CD4-positive, alpha-beta T cell (primary cell): ENCODE measurements at regions of chr12 and their contacts with region 1.

Region 1: GRCh38 chr12:49740930-49741881 is at the start of gene TMBIM6:
- DNase-seq: peak; percentile 96 to 100 (median 98)
- ATAC-seq: peak; percentile 86
- H3K4me3 ChIP-seq: peak within 1 kb of the TSS; percentile 83
- H3K4me3 Mint-ChIP-seq: peak within 1 kb of the TSS; percentile 92
- H3K27ac ChIP-seq: peak within 1 kb of the TSS; percentile 99
- H3K27ac Mint-ChIP-seq: peak within 1 kb of the TSS; percentile 96
- H3K4me1 ChIP-seq: peaks cover 40% of the 10 kb centered on the region
- H3K4me1 Mint-ChIP-seq: peaks cover 47% of the 10 kb centered on the region
- H3K27me3 ChIP-seq: no peaks in the 10 kb centered on the region
- H3K27me3 Mint-ChIP-seq: no peaks in the 10 kb centered on the region
- CTCF ChIP-seq: peak; percentile 83
- total RNA-seq, gene TMBIM6: 274 to 279 TPM

Region 2: DNA sequence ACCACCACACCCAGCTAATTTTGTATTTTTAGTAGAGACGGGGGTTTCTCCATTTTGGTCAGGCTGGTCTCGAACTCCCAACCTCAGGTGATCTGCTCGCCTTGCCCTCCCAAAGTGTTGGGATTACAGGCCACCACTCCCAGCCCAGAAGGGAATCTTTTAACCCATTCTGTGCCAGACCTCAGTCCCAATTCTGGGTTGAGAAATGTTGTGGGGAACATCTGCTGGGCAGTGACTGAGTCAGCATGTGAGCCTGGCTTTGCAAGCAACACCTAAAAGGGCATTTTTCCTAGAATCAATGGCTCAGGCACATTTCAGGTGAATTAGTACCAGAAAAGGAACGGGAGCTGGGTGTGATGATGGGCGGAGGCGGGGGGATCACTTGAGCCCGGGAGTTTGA is 381.5 kb before region 1 on chr12:
- CTCF ChIA-PET with region 1: no interaction called
- POLR2A ChIA-PET with region 1: no interaction called
- intact Hi-C with region 1: no loop called
- DNase-seq: no peak
- ATAC-seq: no peak
- H3K4me3 ChIP-seq: no peak overlapping the region
- H3K4me3 Mint-ChIP-seq: no peak overlapping the region
- H3K27ac ChIP-seq: no peak overlapping the region
- H3K27ac Mint-ChIP-seq: no peak overlapping the region
- H3K4me1 ChIP-seq: peaks cover 3% of the 10 kb centered on the region
- H3K4me1 Mint-ChIP-seq: peaks cover 7% of the 10 kb centered on the region
- H3K27me3 ChIP-seq: peaks cover 0 to 7% of the 10 kb centered on the region in 2 experiments
- H3K27me3 Mint-ChIP-seq: peaks cover 22% of the 10 kb centered on the region
- CTCF ChIP-seq: no peak

Region 3: DNA sequence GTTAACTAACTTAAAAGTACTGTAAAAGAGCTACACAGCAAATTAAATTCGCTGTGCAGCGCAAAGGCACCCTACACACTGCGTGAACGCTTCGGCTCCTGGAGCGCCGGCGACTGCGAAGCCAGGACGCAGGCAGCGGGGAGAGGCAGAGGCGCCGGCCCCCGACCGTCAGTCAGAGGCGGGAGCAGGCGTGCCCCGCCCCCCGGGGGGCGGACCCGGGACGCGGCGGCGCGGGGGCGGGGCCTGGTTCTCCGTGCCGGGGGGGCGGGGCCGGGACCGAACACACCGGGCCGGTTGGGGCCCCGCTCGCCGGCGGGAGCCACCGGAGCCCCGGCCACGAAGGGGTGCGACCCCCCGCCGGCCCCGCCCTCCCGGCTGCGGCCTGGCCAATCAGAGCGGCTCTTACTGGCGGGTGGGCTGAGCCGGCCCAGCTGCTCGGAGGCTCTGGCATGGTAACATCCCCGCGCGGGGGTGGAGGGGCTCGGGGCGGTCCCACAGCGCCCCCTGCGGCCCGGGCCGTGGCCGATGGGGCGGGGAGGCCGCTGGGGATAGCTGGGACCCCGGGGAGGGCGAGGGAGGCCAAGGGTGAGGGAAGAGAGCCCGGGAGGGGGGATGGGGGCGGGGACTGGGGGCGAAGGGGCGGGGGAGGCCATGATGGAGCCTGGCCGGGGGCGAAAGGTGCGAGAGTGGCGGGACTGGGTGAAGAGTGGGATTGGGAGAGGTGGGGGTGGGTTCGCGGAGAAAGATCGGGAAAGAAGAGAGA is 117.9 kb before region 1 on chr12 and contains the start of gene PRPF40B:
- CTCF ChIA-PET with region 1: interaction called, 11 read pairs
- POLR2A ChIA-PET with region 1: interaction called, 34 read pairs
- intact Hi-C with region 1: no loop called
- DNase-seq: peak; percentile 70 to 93 (median 84)
- ATAC-seq: peak; percentile 76
- H3K4me3 ChIP-seq: peak within 1 kb of the TSS; percentile 70
- H3K4me3 Mint-ChIP-seq: peak within 1 kb of the TSS; percentile 92
- H3K27ac ChIP-seq: peak within 1 kb of the TSS; percentile 58 to 66
- H3K27ac Mint-ChIP-seq: peak within 1 kb of the TSS; percentile 92
- H3K4me1 ChIP-seq: peaks cover 29% of the 10 kb centered on the region
- H3K4me1 Mint-ChIP-seq: peaks cover 30% of the 10 kb centered on the region
- H3K27me3 ChIP-seq: no peaks in the 10 kb centered on the region
- H3K27me3 Mint-ChIP-seq: peaks cover 6% of the 10 kb centered on the region
- CTCF ChIP-seq: peak; percentile 23
- total RNA-seq, gene PRPF40B: 4.7 to 6.5 TPM

Region 4: GRCh38 chr12:49644620-49644994 is 96.6 kb before region 1 on chr12:
- CTCF ChIA-PET with region 1: interaction called, 8 read pairs
- POLR2A ChIA-PET with region 1: interaction called, 11 read pairs
- intact Hi-C with region 1: no loop called
- DNase-seq: peak; percentile 73 to 92 (median 80)
- ATAC-seq: peak; percentile 95
- H3K4me3 ChIP-seq: no peak overlapping the region
- H3K4me3 Mint-ChIP-seq: peak overlapping the region; percentile 2
- H3K27ac ChIP-seq: peak overlapping the region; percentile 17 to 18
- H3K27ac Mint-ChIP-seq: peak overlapping the region; percentile 78
- H3K4me1 ChIP-seq: peaks cover 31% of the 10 kb centered on the region
- H3K4me1 Mint-ChIP-seq: peaks cover 36% of the 10 kb centered on the region
- H3K27me3 ChIP-seq: no peaks in the 10 kb centered on the region
- H3K27me3 Mint-ChIP-seq: no peaks in the 10 kb centered on the region
- CTCF ChIP-seq: peak; percentile 98

Region 5: DNA sequence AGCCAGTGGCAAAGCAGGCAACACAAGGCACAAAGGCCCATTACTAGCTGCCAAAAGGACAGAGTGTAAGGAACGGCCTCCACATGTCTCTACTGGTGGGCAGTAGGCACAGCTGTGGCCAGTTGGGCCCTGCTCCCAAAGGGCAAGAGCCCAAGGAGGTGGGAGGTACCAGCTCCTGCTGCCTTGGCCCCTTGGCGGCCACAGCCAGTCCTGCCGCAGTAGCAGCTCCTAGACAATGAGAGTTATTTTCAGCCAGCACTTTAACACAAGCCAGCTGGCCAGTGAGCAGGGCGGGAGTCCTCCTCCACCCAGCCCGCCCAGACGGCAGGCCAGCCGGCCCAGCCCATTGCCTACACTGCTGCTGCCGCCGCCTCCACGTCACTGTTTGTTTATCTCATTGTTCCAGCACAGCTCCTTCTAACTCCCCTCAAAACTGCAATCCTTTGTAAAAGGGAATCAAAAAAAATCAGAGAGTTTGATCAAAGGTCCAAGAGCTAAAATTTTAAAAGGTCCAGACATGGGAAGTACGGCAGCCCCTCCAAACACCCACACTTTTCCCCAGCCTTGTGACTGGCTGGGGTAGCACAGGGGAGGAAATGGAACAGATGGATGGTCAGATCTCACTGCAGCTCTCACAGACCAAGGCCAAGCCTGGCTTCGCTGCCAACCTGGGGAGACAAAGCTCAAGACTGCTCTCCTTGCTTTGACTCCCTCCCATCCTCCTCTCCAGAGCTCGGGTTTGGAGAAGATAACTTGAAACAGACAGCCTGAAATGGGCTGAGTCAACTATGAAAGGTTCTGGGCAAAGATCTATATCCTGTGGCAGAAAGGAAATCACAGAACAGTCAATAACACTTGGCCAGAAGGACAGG is 67.5 kb before region 1 on chr12:
- CTCF ChIA-PET with region 1: interaction called, 9 read pairs
- POLR2A ChIA-PET with region 1: interaction called, 21 read pairs
- intact Hi-C with region 1: no loop called
- DNase-seq: peak in 6 of 14 experiments; percentile 21 to 55 (median 32)
- ATAC-seq: peak; percentile 7
- H3K4me3 ChIP-seq: no peak overlapping the region
- H3K4me3 Mint-ChIP-seq: peak overlapping the region; percentile 72
- H3K27ac ChIP-seq: peak overlapping the region; percentile 89 to 93
- H3K27ac Mint-ChIP-seq: peak overlapping the region; percentile 97
- H3K4me1 ChIP-seq: peaks cover 71% of the 10 kb centered on the region
- H3K4me1 Mint-ChIP-seq: peaks cover 91% of the 10 kb centered on the region
- H3K27me3 ChIP-seq: no peaks in the 10 kb centered on the region
- H3K27me3 Mint-ChIP-seq: no peaks in the 10 kb centered on the region
- CTCF ChIP-seq: no peak

Region 6: GRCh38 chr12:49763006-49763591 is 21.9 kb after region 1 on chr12:
- CTCF ChIA-PET with region 1: interaction called, 53 read pairs
- POLR2A ChIA-PET with region 1: interaction called, 77 read pairs
- intact Hi-C with region 1: loop called (anchors 1 to 2 kb)
- DNase-seq: peak; percentile 61 to 90 (median 76)
- ATAC-seq: peak; percentile 82
- H3K4me3 ChIP-seq: no peak overlapping the region
- H3K4me3 Mint-ChIP-seq: peak overlapping the region; percentile 1
- H3K27ac ChIP-seq: peak overlapping the region; percentile 55 to 71
- H3K27ac Mint-ChIP-seq: peak overlapping the region; percentile 73
- H3K4me1 ChIP-seq: peaks cover 63% of the 10 kb centered on the region
- H3K4me1 Mint-ChIP-seq: peaks cover 62% of the 10 kb centered on the region
- H3K27me3 ChIP-seq: no peaks in the 10 kb centered on the region
- H3K27me3 Mint-ChIP-seq: no peaks in the 10 kb centered on the region
- CTCF ChIP-seq: peak; percentile 87

Region 7: DNA sequence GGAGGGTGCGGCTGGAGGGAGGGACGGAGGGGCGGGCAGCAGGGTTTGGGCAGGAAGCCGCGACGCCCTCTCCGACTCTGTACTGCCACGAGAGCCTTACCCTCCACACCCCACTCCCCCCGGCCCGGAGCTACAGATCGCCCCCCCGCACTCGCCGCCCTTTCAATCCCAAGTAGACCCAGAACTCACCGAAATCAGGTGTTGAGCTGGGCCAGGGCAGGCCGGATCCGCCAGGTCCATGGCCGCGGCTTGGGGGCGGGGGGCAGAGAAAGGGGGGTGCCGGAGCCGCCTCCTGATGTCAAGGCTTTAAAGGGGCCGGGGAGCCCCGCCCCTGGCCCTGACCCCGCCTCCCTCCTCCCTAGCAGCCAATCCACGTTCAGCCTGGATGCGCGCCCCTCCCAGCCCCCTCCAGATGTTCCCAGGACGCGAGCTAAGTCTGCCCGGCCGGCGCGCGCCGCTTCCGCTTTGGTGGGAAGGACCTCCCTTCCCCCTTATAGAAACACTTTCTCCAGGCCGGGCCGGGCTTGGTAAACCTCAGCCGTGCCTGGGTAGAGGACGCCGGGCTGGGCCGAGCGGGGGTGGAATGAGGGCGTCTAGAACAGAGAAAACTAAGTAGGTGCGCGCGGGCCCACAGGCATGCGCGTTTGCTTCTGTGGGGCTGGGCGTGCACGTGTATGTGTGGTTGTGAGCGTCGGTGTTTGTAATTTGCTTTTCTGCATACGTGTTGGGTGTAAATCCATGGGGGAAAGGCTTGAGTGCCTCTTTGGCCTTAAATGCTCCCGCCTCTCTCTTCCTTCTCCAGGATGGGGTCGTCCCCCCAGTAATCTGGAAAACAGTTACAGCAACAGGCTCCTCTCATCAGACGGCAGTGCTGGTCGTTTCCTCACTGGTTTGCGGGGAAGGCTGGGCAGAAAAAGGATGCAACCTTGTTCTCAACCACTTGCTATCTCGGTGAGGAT is 87.2 kb after region 1 on chr12 and contains the start of gene NCKAP5L:
- CTCF ChIA-PET with region 1: interaction called, 18 read pairs
- POLR2A ChIA-PET with region 1: interaction called, 44 read pairs
- intact Hi-C with region 1: loop called (anchors 1 to 5 kb)
- DNase-seq: peak; percentile 88 to 98 (median 92)
- ATAC-seq: peak; percentile 95
- H3K4me3 ChIP-seq: peak within 1 kb of the TSS; percentile 64
- H3K4me3 Mint-ChIP-seq: peak within 1 kb of the TSS; percentile 98
- H3K27ac ChIP-seq: peak within 1 kb of the TSS; percentile 63 to 72
- H3K27ac Mint-ChIP-seq: peak within 1 kb of the TSS; percentile 89
- H3K4me1 ChIP-seq: peaks cover 31% of the 10 kb centered on the region
- H3K4me1 Mint-ChIP-seq: peaks cover 42% of the 10 kb centered on the region
- H3K27me3 ChIP-seq: no peaks in the 10 kb centered on the region
- H3K27me3 Mint-ChIP-seq: no peaks in the 10 kb centered on the region
- CTCF ChIP-seq: no peak
- total RNA-seq, gene NCKAP5L: 9.2 to 9.8 TPM

Region 8: DNA sequence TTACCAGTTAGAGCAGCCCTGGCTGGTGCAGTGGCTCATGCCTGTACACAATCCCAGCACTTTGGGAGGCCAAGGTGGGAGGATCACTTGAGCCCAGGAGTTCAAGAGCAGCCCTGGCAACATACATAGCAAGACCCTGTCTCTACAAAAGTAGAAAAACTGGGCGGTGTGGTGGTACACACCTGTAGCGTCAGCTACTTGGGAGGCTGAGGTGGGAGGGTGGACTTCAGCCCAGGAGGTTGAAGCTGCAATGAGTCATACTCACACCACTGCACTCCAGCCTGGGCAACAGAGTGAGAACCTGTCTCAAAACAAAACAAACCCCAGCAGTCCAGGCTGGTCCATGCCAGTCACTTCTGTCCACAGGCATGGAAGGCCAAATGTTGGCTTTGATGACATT is 378.2 kb after region 1 on chr12:
- CTCF ChIA-PET with region 1: no interaction called
- POLR2A ChIA-PET with region 1: no interaction called
- intact Hi-C with region 1: no loop called
- DNase-seq: peak in 1 of 14 experiments; percentile 12
- ATAC-seq: no peak
- H3K4me3 ChIP-seq: no peak overlapping the region
- H3K4me3 Mint-ChIP-seq: no peak overlapping the region
- H3K27ac ChIP-seq: no peak overlapping the region
- H3K27ac Mint-ChIP-seq: no peak overlapping the region
- H3K4me1 ChIP-seq: peaks cover 39% of the 10 kb centered on the region
- H3K4me1 Mint-ChIP-seq: peaks cover 46% of the 10 kb centered on the region
- H3K27me3 ChIP-seq: no peaks in the 10 kb centered on the region
- H3K27me3 Mint-ChIP-seq: no peaks in the 10 kb centered on the region
- CTCF ChIP-seq: no peak

Region 9: DNA sequence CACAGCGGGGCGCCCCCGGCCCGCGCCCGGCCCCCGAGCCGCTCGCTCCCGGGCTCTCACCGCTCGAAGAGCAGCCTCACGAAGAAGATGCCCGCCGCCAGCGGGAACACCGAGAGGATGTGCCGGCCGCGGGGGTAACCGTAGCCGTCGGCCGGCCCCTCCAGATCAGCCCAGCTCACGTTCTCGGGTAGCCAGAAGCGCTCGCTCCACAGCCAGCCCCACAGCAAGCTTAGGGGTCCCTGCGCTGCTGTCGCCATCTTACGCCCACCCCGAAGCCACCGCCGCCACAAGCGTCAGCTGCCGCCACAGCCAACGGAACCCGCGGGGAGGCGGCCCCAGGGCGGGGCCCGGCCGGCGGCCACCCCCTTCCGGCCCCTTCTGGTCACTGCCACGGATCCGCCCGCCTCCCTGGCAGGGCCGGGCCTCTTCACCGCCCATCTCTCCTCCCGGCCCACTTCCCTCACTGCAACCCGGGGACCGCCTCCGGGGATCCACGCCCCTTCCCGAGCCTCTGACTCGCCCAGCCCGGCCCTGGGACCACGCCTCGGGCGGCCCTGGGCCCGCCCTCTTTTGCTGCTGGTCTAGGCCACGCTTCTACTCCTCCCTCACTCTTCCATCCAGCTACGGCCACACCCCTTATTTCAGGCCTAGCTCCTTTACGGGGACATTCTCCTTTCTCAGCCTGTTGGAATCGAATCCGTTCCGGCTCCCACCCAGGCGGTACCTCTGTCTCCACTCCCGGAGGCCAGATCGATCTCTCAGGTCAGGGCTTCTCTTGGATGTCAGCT is 426.0 kb after region 1 on chr12 and contains the start of gene CERS5:
- CTCF ChIA-PET with region 1: no interaction called
- POLR2A ChIA-PET with region 1: interaction called, 4 read pairs
- intact Hi-C with region 1: loop called in 1 of 2 experiments (anchors 5 kb)
- DNase-seq: peak; percentile 91 to 99 (median 94)
- ATAC-seq: peak; percentile 96
- H3K4me3 ChIP-seq: peak within 1 kb of the TSS; percentile 84
- H3K4me3 Mint-ChIP-seq: peak within 1 kb of the TSS; percentile 95
- H3K27ac ChIP-seq: peak within 1 kb of the TSS; percentile 85
- H3K27ac Mint-ChIP-seq: peak within 1 kb of the TSS; percentile 81
- H3K4me1 ChIP-seq: peaks cover 20% of the 10 kb centered on the region
- H3K4me1 Mint-ChIP-seq: peaks cover 34% of the 10 kb centered on the region
- H3K27me3 ChIP-seq: no peaks in the 10 kb centered on the region
- H3K27me3 Mint-ChIP-seq: no peaks in the 10 kb centered on the region
- CTCF ChIP-seq: no peak
- total RNA-seq, gene CERS5: 42.3 to 44.5 TPM